Heart right ventricle (tissue), 16 donors: ENCODE measurements at regions of chr20 and their contacts with region 1.

Region 1: GRCh38 chr20:49384437-49385088 is 97.9 kb downstream of the KCNB1 start:
- DNase-seq: peak; percentile 75 to 81
- ATAC-seq: peak in 6 of 8 donors; percentile 29 to 76 (median 49)
- H3K4me3 ChIP-seq: no peak overlapping the region
- H3K27ac ChIP-seq: no peak overlapping the region
- H3K4me1 ChIP-seq: peaks cover 0 to 46% (median 16%) of the 10 kb centered on the region in 9 donors
- H3K27me3 ChIP-seq: no peaks in the 10 kb centered on the region
- CTCF ChIP-seq: peak; percentile 58 to 81 (median 72)

Region 2: DNA sequence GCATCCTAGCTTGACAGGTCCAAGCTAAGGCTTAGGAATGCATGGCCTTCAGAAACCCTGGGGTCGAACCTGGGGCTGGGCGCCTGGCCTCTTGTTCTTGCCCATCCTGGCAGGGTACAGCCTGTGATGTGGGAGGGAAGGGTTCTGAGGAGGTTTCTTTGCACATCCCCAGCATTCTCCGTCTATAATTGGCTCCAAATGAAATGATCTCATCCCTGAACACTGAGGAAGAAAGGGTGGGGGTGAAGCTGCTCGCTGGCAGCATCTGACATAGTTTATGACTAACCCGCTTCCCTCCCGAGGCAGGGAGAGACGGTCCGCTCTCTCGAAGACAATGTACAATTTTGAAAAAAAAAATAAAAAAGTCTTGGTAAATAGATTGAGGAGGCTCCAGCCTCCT is 39.6 kb before region 1 on chr20:
- intact Hi-C with region 1: loop called in 1 of 10 experiments (anchors 5 kb)
- DNase-seq: peak; percentile 39 to 53
- ATAC-seq: peak; percentile 87 to 98 (median 94)
- H3K4me3 ChIP-seq: peak overlapping the region in 1 of 10 donors; percentile 4
- H3K27ac ChIP-seq: peak overlapping the region in 3 of 10 donors; percentile 42 to 82 (median 48)
- H3K4me1 ChIP-seq: peaks cover 0 to 16% (median 16%) of the 10 kb centered on the region in 9 donors
- H3K27me3 ChIP-seq: peaks cover 0 to 3% (median 0%) of the 10 kb centered on the region in 7 donors
- CTCF ChIP-seq: no peak

Region 3: DNA sequence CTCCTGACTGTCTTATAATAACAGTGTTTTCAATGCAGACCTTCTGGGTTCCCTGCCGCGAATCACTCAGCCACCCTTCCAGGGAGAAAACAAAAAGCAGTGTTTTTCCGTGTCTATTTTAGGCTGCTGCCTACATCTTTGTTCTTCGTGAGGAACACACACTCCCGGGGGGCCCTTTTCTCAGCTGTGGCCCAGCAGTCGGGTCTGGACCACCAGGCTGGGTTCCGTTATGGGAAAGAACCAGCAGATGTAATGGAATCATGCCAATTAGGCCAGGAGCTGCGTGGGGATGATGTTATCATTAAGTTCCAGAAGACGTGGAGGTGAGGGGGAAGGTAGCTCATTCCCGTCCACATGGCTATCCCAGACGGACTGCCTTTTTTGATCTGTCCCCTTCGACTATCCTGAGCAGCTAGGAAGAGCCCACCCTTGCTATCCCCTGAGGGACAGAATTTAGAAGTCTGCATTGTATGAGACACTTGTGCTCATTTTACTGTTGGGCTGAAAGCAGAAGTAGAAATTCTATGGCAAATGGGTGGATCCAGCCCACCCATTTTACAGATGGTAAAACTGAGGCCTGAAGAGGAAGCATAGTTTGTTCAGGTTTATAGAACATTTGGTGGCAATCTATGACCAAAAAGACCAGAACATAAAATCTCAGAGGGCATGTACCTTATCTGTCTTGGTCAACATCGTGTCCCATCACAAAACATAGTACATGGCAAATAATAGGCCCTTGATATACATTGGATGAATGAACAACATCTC is 43.4 kb after region 1 on chr20:
- intact Hi-C with region 1: loop called in 1 of 10 experiments (anchors 5 kb)
- DNase-seq: peak; percentile 37 to 59
- ATAC-seq: peak; percentile 14 to 89 (median 77)
- H3K4me3 ChIP-seq: peak overlapping the region in 4 of 10 donors; percentile 13 to 25 (median 20)
- H3K27ac ChIP-seq: peak overlapping the region; percentile 45 to 88 (median 78)
- H3K4me1 ChIP-seq: peaks cover 0 to 54% (median 28%) of the 10 kb centered on the region in 9 donors
- H3K27me3 ChIP-seq: no peaks in the 10 kb centered on the region
- CTCF ChIP-seq: no peak

Region 4: GRCh38 chr20:49484180-49485140 is 99.9 kb after region 1 on chr20:
- intact Hi-C with region 1: loop called (anchors 1 to 10 kb)
- DNase-seq: peak; percentile 71 to 82
- ATAC-seq: peak; percentile 88 to 94 (median 92)
- H3K4me3 ChIP-seq: peak overlapping the region in 9 of 10 donors; percentile 42 to 62 (median 54)
- H3K27ac ChIP-seq: no peak overlapping the region
- H3K4me1 ChIP-seq: peaks cover 3 to 25% (median 14%) of the 10 kb centered on the region in 9 donors
- H3K27me3 ChIP-seq: peaks cover 0 to 76% (median 26%) of the 10 kb centered on the region in 7 donors
- CTCF ChIP-seq: peak; percentile 62 to 94 (median 80)

Region 5: GRCh38 chr20:49496043-49496442 is 111.5 kb after region 1 on chr20:
- intact Hi-C with region 1: no loop called
- DNase-seq: no peak
- ATAC-seq: no peak
- H3K4me3 ChIP-seq: no peak overlapping the region
- H3K27ac ChIP-seq: no peak overlapping the region
- H3K4me1 ChIP-seq: peaks cover 0 to 7% (median 0%) of the 10 kb centered on the region in 9 donors
- H3K27me3 ChIP-seq: peaks cover 0 to 20% (median 1%) of the 10 kb centered on the region in 7 donors
- CTCF ChIP-seq: no peak